ENCODE measurements at regions of chr15 and their contacts with region 1.

Region 1: DNA sequence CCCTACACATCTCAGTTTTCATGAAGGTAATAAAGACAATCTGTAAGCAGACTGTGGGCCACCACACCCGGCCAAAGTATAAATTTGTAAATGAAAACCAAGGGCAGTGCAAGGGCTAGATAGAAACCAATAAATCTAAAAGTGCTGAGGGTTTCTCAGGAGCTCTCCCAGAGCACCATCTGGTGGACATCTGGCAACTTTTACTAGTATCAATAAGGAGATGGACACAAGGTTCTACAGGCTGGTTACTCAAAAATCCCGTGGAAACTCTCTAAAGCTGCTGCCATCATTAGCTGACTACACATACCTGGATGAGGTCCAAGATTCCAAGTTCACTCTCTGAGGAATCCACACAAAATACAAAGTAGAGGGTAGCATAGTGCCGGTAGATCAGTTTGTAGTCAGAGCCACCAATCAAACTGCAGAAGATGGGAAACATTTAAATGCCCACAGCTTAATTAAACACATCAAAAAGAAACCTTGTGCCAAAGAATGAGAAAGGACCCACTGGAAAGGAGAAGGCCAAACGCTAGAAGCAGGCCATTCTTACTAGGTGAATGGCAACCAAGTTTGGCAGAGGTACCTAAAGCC is 5.5 kb downstream of the AP3S2 start:
- DNase-seq: peak; percentile 70
- H3K4me3 Mint-ChIP-seq: no peak overlapping the region
- H3K27ac Mint-ChIP-seq: no peak overlapping the region
- H3K4me1 Mint-ChIP-seq: no peaks in the 10 kb centered on the region
- H3K27me3 Mint-ChIP-seq: no peaks in the 10 kb centered on the region
- CTCF ChIP-seq: peak; percentile 51

Region 2: GRCh38 chr15:89740137-89740536 is 148.2 kb before region 1 on chr15:
- CTCF ChIA-PET with region 1: interaction called, 20 read pairs
- POLR2A ChIA-PET with region 1: interaction called, 7 read pairs
- intact Hi-C with region 1: no loop called
- DNase-seq: peak; percentile 78
- H3K4me3 Mint-ChIP-seq: no peak overlapping the region
- H3K27ac Mint-ChIP-seq: no peak overlapping the region
- H3K4me1 Mint-ChIP-seq: no peaks in the 10 kb centered on the region
- H3K27me3 Mint-ChIP-seq: peaks cover 19% of the 10 kb centered on the region
- CTCF ChIP-seq: peak; percentile 89

Region 3: GRCh38 chr15:89750560-89751542 is 137.5 kb before region 1 on chr15 and contains the start of gene MESP1:
- CTCF ChIA-PET with region 1: interaction called, 11 read pairs
- POLR2A ChIA-PET with region 1: interaction called, 4 read pairs
- intact Hi-C with region 1: no loop called
- DNase-seq: peak; percentile 86
- H3K4me3 Mint-ChIP-seq: peak within 1 kb of the TSS; percentile 49
- H3K27ac Mint-ChIP-seq: no peak within 1 kb of the TSS
- H3K4me1 Mint-ChIP-seq: peaks cover 6% of the 10 kb centered on the region
- H3K27me3 Mint-ChIP-seq: no peaks in the 10 kb centered on the region
- CTCF ChIP-seq: peak; percentile 76
- total RNA-seq, gene MESP1: 0.58 and 1.6 TPM in 2 replicates

Region 4: GRCh38 chr15:89776274-89777072 is 111.8 kb before region 1 on chr15 and contains the start of gene MESP2:
- CTCF ChIA-PET with region 1: interaction called, 17 read pairs
- POLR2A ChIA-PET with region 1: interaction called, 4 read pairs
- intact Hi-C with region 1: no loop called
- DNase-seq: peak; percentile 62
- H3K4me3 Mint-ChIP-seq: no peak within 1 kb of the TSS
- H3K27ac Mint-ChIP-seq: no peak within 1 kb of the TSS
- H3K4me1 Mint-ChIP-seq: peaks cover 14% of the 10 kb centered on the region
- H3K27me3 Mint-ChIP-seq: no peaks in the 10 kb centered on the region
- CTCF ChIP-seq: no peak
- total RNA-seq, gene MESP2: not detected in 2 replicates

Region 5: GRCh38 chr15:90086868-90087268 is 198.6 kb after region 1 on chr15:
- CTCF ChIA-PET with region 1: interaction called, 16 read pairs
- POLR2A ChIA-PET with region 1: interaction called, 21 read pairs
- intact Hi-C with region 1: no loop called
- DNase-seq: peak; percentile 76
- H3K4me3 Mint-ChIP-seq: no peak overlapping the region
- H3K27ac Mint-ChIP-seq: no peak overlapping the region
- H3K4me1 Mint-ChIP-seq: no peaks in the 10 kb centered on the region
- H3K27me3 Mint-ChIP-seq: no peaks in the 10 kb centered on the region
- CTCF ChIP-seq: peak; percentile 83

Measured in MCF 10A (cell line).